Activated CD4-positive, alpha-beta memory T cell treated with anti-CD3 and anti-CD28 coated beads, Interleukin-2, amount 10 ng/mL, durations not matched to agents 7 days and 5 days (primary cell): ENCODE measurements at regions of chr1 and their contacts with region 1.

Region 1: DNA sequence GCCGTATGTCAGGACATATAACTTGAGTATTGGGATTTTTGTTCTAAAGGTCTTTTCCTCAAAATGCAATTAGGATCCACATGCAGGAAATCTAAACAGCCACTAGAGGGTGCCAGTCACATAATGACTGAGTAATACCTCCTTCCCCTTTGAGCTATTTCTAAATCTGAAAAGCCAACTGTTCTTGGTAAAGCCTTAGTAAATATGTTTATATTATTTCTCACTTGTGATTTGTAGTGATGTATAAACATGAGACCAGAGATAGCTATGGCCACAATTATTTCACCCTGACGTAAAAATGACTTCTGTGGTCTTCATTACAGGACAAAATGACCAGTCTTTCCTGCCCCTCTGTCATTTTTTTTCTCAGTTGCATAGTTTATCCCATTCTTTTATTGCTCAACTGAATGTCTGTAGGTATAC is 41.0 kb upstream of the DR1 start:
- DNase-seq: peak; percentile 42
- H3K4me3 Mint-ChIP-seq: no peak overlapping the region
- H3K27ac Mint-ChIP-seq: no peak overlapping the region
- H3K4me1 Mint-ChIP-seq: no peaks in the 10 kb centered on the region
- H3K27me3 Mint-ChIP-seq: no peaks in the 10 kb centered on the region

Region 2: GRCh38 chr1:93078986-93079654 is 225.6 kb before region 1 on chr1 and contains the start of gene MTF2:
- CTCF ChIA-PET with region 1: interaction called, 27 read pairs
- POLR2A ChIA-PET with region 1: interaction called, 11 read pairs
- DNase-seq: peak; percentile 95
- H3K4me3 Mint-ChIP-seq: peak within 1 kb of the TSS; percentile 100
- H3K27ac Mint-ChIP-seq: peak within 1 kb of the TSS; percentile 94
- H3K4me1 Mint-ChIP-seq: peaks cover 42% of the 10 kb centered on the region
- H3K27me3 Mint-ChIP-seq: no peaks in the 10 kb centered on the region
- total RNA-seq, gene MTF2: 55.5 to 56.6 TPM

Region 3: DNA sequence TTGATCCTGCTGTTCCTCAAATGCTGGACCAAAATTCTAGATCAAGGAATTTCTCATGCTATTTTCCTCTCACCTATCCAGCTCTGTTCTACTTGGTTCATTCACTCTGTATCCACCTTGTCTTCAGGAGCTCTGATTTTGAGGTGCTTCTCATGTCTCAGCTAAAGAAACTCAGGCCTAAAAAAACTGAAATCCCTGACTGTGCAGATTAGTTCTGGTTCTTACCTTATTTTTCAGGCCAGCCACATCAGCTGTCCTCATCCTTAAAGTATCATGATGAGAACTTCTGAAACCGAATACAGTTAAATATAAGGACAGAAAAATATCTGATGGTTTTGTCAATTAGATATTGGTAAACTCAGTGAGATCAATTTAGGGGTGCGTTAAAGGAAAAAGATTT is 13.2 kb after region 1 on chr1:
- CTCF ChIA-PET with region 1: interaction called, 11 read pairs
- POLR2A ChIA-PET with region 1: no interaction called
- DNase-seq: no peak
- H3K4me3 Mint-ChIP-seq: no peak overlapping the region
- H3K27ac Mint-ChIP-seq: no peak overlapping the region
- H3K4me1 Mint-ChIP-seq: no peaks in the 10 kb centered on the region
- H3K27me3 Mint-ChIP-seq: no peaks in the 10 kb centered on the region

Region 4: DNA sequence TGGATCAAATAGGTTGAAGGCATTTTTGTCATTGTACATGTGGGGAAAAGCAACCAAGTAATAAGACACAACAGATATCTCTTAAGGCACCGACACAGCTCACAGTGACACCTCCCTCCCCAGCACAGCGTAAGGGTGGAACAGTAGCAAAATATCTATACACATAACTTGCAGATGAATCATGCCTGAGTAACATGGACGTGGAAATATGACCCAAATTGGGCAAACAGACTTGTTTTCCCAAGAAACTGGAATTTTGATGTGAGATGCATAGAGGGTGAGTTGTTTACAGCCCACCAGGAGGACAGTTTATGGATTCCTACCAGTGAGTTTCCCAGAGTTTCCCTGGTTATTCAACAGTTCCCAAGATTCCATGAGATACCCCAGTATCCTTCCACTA is 33.7 kb after region 1 on chr1:
- CTCF ChIA-PET with region 1: interaction called, 19 read pairs
- POLR2A ChIA-PET with region 1: no interaction called
- DNase-seq: no peak
- H3K4me3 Mint-ChIP-seq: no peak overlapping the region
- H3K27ac Mint-ChIP-seq: no peak overlapping the region
- H3K4me1 Mint-ChIP-seq: peaks cover 9% of the 10 kb centered on the region
- H3K27me3 Mint-ChIP-seq: no peaks in the 10 kb centered on the region

Region 5: GRCh38 chr1:93358293-93358692 is 53.6 kb after region 1 on chr1:
- CTCF ChIA-PET with region 1: interaction called, 10 read pairs
- POLR2A ChIA-PET with region 1: interaction called, 3 read pairs
- DNase-seq: no peak
- H3K4me3 Mint-ChIP-seq: no peak overlapping the region
- H3K27ac Mint-ChIP-seq: no peak overlapping the region
- H3K4me1 Mint-ChIP-seq: peaks cover 55% of the 10 kb centered on the region
- H3K27me3 Mint-ChIP-seq: no peaks in the 10 kb centered on the region

Region 6: DNA sequence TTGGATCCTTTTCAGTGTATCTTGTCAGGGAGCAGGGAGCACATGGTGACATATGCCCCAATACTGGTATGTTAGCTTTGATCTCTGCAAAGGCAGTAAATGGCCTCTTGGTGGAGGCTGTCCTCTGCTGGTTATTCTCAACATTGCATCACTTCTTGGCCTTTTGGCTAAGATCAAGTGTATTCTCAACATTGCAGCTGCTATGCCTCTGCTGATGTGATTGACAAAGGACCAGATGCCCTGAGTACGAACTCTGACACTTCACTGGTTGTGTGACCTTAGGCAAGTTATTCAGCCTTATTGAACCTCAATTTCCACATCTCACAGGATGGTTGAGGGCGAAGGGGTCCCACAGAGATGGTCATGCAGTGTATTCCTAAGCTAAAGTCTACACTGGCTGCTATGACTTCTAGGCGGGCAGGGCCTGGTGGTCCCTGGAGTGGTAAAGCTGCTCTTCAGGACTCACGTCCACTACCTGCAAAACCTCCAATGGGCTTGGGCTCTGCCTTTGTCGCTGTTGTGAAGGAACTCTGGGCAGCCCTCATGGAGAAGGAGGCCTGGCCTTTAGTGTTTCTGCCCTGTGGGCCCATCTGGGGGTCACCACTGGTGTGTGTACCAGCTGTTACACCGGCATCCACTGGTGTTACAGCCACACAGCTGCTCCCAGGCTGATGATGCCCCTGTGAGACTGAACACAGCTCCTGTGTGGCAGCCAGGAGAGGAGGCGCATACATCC is 509.5 kb after region 1 on chr1:
- CTCF ChIA-PET with region 1: interaction called, 24 read pairs
- POLR2A ChIA-PET with region 1: no interaction called
- DNase-seq: peak; percentile 63
- H3K4me3 Mint-ChIP-seq: no peak overlapping the region
- H3K27ac Mint-ChIP-seq: no peak overlapping the region
- H3K4me1 Mint-ChIP-seq: peaks cover 30% of the 10 kb centered on the region
- H3K27me3 Mint-ChIP-seq: peaks cover 2% of the 10 kb centered on the region